Right ventricle myocardium superior (tissue), 1 donor: ENCODE measurements at regions of chr6 and their contacts with region 1.

Region 1: GRCh38 chr6:34701199-34701598 is 4.6 kb upstream of the ILRUN start:
- DNase-seq: no peak
- ATAC-seq: no peak

Region 2: DNA sequence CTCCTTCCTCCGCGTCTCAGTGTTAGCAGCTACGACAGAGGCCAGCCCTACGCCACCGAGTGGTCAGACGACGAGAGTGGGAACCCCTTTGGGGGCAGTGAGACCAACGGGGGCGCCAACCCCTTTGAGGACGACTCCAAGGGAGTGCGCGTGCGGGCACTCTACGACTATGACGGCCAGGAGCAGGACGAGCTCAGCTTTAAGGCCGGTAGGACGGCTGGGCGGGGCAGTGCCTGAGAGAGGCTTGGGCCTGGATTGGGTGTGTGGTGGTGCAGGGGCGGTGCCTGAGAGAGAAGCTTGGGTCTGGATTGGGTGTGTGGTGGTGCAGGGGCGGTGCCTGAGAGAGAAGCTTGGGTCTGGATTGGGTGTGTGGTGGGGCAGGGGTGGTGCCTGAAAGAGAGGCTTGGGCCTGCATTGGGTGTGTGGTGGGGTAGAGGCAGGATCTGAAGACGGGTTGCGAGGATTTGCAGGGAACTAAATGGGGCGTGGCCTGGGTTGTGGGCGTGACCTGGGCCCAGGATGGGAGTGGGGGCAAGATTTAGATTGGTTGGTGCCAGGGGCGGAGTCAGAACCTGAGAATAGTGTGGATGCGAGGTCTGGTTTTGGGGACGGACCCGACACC is 169.5 kb before region 1 on chr6:
- intact Hi-C with region 1: no loop called
- DNase-seq: peak; percentile 61
- ATAC-seq: no peak

Region 3: DNA sequence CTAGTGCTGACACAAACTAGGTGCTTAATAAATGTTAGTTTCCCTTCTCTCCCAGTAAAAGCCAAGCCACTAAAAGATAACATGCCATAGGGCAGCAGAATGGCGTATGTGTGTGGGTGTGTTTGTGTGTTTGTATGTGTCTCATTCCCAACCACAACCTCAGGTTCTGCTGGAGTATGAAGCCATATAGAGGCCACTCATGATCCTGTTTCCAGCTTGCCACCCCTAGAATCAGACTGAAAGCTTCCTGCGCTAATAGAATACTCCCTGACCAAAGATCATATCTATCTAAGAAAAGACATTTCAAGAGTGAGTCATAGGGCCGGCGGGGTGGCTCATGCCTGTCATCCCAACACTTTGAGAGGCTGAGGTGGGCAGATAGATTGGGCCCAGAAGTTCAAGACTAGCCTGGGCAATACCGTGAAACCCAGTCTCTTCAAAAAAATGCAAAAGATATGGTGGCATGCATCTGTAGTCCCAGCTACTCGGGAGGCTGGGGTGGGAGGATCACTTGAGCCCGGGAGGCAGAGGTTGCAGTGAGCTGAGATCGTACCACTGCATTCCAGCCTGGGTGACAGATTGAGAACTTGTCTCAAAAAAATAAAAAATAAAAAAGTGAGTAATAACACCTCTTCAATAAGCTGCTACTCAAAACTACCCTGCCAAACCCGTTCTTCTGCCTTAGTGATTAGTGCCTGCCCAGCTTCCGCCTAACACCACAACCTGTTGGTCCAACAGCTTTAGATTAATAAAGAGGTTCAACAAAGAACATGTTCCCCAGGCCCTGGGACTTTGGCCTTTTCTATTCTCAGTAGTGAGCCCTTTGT is 44.3 kb after region 1 on chr6:
- intact Hi-C with region 1: loop called (anchors 5 kb)
- DNase-seq: no peak
- ATAC-seq: no peak